ENCODE measurements at regions of chr1 and their contacts with region 1.

Region 1: DNA sequence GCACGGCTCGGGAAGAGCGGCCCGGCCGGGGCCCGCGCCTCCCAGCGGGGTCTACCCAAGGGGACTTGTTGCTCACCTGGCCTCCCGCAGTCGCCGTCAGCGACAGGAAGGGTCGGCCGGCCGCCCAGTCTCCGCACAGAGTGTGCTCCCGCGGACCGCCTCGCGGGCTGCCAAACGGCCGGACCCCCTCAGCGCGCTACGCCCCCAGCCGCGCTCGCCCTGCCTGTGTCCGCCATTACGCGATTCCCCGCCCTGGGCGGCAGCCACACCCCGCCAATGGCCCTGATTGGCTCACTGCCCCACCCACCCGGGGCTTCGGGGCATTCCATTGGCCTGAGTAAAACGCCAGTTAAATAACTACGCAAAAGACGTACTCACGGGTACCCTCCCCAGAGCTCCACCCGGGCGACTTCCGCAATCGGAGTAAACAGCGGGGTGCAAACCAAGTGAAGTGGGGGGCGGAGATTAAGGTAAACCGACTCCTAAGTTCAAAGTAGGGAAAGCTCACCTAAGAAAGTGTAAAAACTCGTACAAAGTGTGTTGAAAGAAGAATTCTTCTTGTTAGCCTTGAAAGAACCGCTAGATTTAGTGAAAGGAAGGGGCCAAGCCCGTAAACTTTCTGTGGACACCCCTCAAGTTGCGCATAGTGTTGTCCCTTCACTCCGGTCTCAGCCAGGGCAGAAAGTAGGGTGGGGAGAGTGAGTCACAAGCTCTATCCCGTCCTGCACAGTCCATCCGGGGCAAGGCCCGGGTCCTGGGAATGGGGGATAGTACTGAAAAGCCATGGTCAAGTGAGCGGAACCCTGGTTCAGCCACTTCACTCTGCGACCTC is at the start of gene WASF2:
- DNase-seq: peak; percentile 96 to 98
- ATAC-seq: peak; percentile 94 to 97 (median 96)
- H3K4me3 ChIP-seq: peak within 1 kb of the TSS; percentile 82 to 100 (median 95)
- H3K27ac ChIP-seq: peak within 1 kb of the TSS; percentile 99 to 100 (median 100)
- H3K4me1 ChIP-seq: peaks cover 19 to 64% (median 57%) of the 10 kb centered on the region in 9 donors
- H3K27me3 ChIP-seq: no peaks in the 10 kb centered on the region
- CTCF ChIP-seq: peak in 2 of 9 donors; percentile 4 to 13
- total RNA-seq, gene WASF2: 41.2 to 75.4 (median 52.0) TPM

Region 2: GRCh38 chr1:27416387-27417111 is 73.6 kb before region 1 on chr1:
- intact Hi-C with region 1: loop called in 3 of 10 experiments (anchors 5 kb)
- DNase-seq: peak in 1 of 2 donors; percentile 54
- ATAC-seq: peak in 7 of 8 donors; percentile 26 to 61 (median 45)
- H3K4me3 ChIP-seq: no peak overlapping the region
- H3K27ac ChIP-seq: peak overlapping the region in 5 of 10 donors; percentile 11 to 82 (median 67)
- H3K4me1 ChIP-seq: peaks cover 13 to 76% (median 58%) of the 10 kb centered on the region in 9 donors
- H3K27me3 ChIP-seq: no peaks in the 10 kb centered on the region
- CTCF ChIP-seq: peak; percentile 24 to 79 (median 67)

Region 3: GRCh38 chr1:27430903-27431600 is 59.1 kb before region 1 on chr1:
- intact Hi-C with region 1: loop called in 5 of 10 experiments (anchors 1 to 5 kb)
- DNase-seq: peak in 1 of 2 donors; percentile 50
- ATAC-seq: peak; percentile 13 to 76 (median 38)
- H3K4me3 ChIP-seq: peak overlapping the region in 3 of 10 donors; percentile 8 to 30 (median 19)
- H3K27ac ChIP-seq: peak overlapping the region; percentile 78 to 88 (median 86)
- H3K4me1 ChIP-seq: peaks cover 31 to 100% (median 97%) of the 10 kb centered on the region in 9 donors
- H3K27me3 ChIP-seq: no peaks in the 10 kb centered on the region
- CTCF ChIP-seq: peak in 3 of 9 donors; percentile 37 to 46 (median 43)

Region 4: GRCh38 chr1:27436204-27437159 is 53.6 kb before region 1 on chr1:
- intact Hi-C with region 1: loop called in 4 of 10 experiments (anchors 5 kb)
- DNase-seq: peak in 1 of 2 donors; percentile 53
- ATAC-seq: peak; percentile 66 to 90 (median 84)
- H3K4me3 ChIP-seq: peak overlapping the region in 5 of 10 donors; percentile 1 to 27 (median 13)
- H3K27ac ChIP-seq: peak overlapping the region; percentile 49 to 86 (median 75)
- H3K4me1 ChIP-seq: peaks cover 31 to 88% (median 81%) of the 10 kb centered on the region in 9 donors
- H3K27me3 ChIP-seq: no peaks in the 10 kb centered on the region
- CTCF ChIP-seq: no peak

Region 5: GRCh38 chr1:27504588-27505419 is 14.7 kb after region 1 on chr1:
- intact Hi-C with region 1: loop called in 1 of 10 experiments (anchors 2 kb)
- DNase-seq: peak; percentile 90 to 93
- ATAC-seq: peak; percentile 93 to 96 (median 94)
- H3K4me3 ChIP-seq: peak overlapping the region in 4 of 10 donors; percentile 31 to 43 (median 38)
- H3K27ac ChIP-seq: peak overlapping the region; percentile 88 to 99 (median 97)
- H3K4me1 ChIP-seq: peaks cover 20 to 44% (median 30%) of the 10 kb centered on the region in 9 donors
- H3K27me3 ChIP-seq: no peaks in the 10 kb centered on the region
- CTCF ChIP-seq: peak in 1 of 9 donors; percentile 6

Region 6: DNA sequence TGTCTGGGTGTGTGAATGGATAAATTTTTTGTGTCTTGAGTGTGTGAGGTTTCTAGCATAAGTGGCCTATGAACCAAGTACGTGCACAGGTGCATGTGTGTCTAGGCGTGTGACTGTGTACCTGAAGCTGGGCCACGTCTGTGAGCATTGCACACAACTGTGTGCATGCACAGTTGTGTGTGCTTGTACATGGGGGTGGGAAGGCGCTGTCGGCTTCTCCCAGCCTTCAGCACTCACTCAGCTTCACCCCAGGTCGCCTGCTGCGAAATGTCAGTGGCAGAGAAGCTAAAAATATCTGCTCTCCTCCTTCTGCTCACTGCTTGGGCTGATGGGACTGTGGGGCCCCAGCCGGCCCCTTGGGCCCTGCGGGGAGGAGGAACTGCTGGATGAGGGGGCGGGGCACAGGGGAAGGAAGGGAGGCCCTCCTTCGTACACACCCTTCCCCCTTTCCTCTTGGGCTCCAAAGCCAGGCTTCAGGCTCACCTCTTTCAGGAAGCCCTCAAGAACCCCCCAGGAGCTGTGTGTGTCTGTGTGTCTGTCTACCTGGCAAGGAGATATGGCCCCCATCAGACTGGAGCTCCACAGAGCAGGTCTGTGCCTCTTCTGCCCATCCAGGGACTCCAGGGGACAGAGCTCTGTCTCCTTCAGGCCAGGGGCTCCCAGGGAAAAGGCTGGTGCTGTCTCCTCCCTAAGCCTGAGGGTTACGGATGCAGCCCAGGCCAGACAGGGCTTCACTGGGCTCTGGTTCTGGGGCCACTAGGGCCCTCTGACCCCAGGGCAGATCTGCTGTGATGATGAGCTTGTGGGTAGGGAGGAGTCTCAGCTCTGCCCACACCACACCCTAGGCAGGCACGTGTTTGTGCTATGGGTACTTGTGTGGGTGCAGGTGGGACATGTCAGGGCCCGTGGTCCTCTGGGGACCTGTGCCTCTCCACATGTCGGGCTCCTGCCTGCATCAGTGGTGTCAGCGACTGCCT is 35.5 kb after region 1 on chr1:
- intact Hi-C with region 1: loop called in 1 of 10 experiments (anchors 5 kb)
- DNase-seq: peak; percentile 87 to 89
- ATAC-seq: peak; percentile 61 to 81 (median 77)
- H3K4me3 ChIP-seq: peak overlapping the region in 9 of 10 donors; percentile 13 to 63 (median 46)
- H3K27ac ChIP-seq: peak overlapping the region; percentile 85 to 97 (median 90)
- H3K4me1 ChIP-seq: peaks cover 79 to 95% (median 90%) of the 10 kb centered on the region in 9 donors
- H3K27me3 ChIP-seq: peaks cover 0 to 6% (median 0%) of the 10 kb centered on the region in 7 donors
- CTCF ChIP-seq: no peak

Region 7: DNA sequence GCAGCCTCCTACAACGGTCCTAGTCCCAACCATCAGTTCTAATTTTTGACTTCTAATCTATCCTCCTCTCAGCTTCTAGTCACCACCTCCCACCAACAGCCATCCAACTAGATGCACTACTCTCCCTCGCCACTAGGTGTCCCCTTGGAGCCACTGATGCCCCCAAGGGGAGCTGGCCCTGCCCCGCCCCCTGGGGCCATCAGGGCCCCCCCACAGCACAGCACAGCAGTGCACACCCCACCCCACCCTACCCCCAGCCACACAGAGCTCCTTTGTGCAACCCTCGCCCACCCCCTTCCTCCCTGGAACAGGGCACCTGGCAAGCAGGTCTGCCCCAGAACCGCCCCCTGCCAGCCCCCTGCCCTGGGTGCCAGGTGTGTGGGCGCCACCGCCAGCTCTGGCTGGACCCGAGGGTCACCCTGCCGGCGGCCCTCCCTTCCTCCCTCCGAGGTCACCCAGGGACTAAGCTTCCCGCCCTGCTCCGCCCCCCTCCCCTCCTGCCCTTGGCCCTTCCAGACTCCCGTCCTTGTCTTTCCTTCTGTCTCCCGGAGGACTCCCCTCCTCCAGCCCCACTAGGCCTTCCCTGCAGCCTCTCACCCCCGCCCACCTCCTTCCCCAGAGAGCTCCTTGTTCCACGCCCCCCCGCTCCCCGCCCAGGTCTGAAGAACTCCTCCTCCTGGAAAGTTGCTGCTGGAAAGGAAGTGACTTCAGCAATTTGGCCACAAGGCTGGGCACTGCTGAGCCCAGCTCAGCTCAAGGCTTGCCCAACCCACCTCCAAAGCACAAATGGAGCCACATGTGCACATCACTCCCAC is 66.9 kb after region 1 on chr1:
- intact Hi-C with region 1: loop called in 1 of 10 experiments (anchors 1 kb)
- DNase-seq: peak; percentile 93 to 96
- ATAC-seq: peak; percentile 65 to 78 (median 72)
- H3K4me3 ChIP-seq: peak overlapping the region in 8 of 10 donors; percentile 10 to 32 (median 22)
- H3K27ac ChIP-seq: peak overlapping the region; percentile 74 to 96 (median 86)
- H3K4me1 ChIP-seq: peaks cover 43 to 84% (median 69%) of the 10 kb centered on the region in 9 donors
- H3K27me3 ChIP-seq: no peaks in the 10 kb centered on the region
- CTCF ChIP-seq: peak; percentile 92 to 98 (median 96)